AG04450 (cell line): ENCODE measurements at regions of chr17 and their contacts with region 1.

Region 1: DNA sequence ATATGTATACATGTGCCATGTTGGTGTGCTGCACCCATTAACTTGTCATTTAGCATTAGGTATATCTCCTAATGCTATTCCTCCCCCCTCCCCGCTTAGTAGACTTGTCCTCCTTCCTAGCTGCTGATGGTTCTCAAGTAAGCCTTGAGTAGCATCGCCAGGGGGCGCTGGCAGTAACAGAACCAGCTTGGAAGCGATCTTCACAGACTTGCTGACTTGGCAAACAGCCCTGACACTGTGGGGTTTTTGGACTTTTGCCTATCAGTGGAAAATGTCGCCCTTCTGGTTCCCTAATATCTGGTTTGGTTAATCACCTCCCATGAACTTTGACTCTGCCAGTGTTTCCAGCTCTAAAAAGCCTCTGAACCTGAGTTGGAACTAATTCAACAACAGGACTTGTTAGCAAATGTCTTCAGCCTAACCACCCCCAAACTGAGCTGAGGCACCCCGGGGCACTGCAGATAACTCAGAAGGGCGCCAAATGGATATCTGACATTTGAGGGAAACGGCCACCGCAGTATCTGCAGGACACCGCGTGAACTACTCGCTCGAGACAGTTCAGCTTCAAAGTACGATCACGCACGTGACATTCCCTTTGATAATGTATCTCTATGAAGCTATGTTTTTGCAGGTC is 15.4 kb upstream of the SPATA32 start:
- DNase-seq: peak; percentile 81
- H3K4me3 ChIP-seq: no peak overlapping the region
- H3K27ac ChIP-seq: peak overlapping the region; percentile 31
- H3K27me3 ChIP-seq: no peaks in the 10 kb centered on the region
- CTCF ChIP-seq: peak; percentile 91

Region 2: DNA sequence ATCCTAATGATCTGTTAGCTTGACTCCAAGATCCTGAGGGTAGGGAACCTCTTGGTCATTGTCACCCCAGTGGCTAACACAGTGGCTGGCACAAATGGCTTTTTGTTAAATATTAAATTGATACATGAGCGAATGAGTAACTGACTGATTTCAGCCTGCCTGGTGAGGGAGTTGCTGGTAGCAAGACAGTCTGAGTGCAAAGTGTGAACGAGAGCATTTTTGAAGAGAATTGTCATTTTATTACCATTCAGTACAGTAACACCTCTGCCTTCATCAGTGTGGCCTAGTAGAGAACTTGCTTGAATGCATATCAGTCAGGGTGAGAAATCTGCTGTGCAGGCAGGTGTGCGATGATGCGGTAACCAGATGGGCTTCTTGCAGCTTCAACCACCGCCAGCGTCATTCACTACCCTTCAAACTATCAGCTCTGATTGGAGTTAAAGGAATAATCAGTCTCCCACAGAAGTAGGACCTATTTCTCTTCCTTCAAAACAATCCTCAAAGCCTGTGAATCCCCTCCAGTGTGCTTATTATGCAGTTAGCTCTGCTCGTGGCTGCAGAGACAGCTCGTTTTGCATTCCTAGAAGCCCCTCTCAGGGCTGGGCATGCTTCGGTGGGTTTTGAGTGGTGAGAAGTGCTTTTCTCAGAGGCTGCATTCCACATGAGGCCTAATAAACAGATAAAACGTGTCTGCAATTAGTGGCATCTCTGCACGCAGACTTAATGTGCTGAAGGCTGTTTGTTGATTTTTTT is 86.7 kb before region 1 on chr17:
- CTCF ChIA-PET with region 1: no interaction called
- POLR2A ChIA-PET with region 1: no interaction called
- DNase-seq: no peak
- H3K4me3 ChIP-seq: no peak overlapping the region
- H3K27ac ChIP-seq: no peak overlapping the region
- H3K27me3 ChIP-seq: peaks cover 2% of the 10 kb centered on the region
- CTCF ChIP-seq: no peak

Region 3: DNA sequence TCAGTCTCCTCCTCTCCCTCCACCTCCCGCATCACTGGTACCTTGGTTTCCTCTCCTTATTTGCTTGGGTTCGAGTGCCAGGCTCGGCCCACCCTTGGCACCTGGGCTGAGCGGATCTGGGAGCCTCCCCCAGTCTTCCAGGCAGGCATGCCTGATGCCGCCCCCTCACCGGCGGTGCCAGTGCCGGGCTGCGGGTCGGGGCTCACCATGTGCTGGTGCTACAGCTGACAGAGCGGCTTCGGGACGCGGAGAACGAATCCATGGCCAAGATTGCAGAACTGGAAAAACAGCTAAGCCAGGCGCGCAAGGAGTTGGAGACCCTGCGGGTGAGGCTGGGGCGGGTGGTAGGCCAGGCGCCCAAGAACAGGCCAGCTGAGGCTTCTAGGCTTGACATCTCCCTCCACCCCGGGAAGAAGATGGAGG is 36.4 kb before region 1 on chr17:
- CTCF ChIA-PET with region 1: no interaction called
- POLR2A ChIA-PET with region 1: no interaction called
- DNase-seq: no peak
- H3K4me3 ChIP-seq: peak overlapping the region; percentile 41; the same call in 1 of the 2 replicates
- H3K27ac ChIP-seq: no peak overlapping the region
- H3K27me3 ChIP-seq: peaks cover 17% of the 10 kb centered on the region
- CTCF ChIP-seq: no peak

Region 4: GRCh38 chr17:45293413-45294211 is 16.3 kb after region 1 on chr17:
- CTCF ChIA-PET with region 1: interaction called, 23 read pairs
- POLR2A ChIA-PET with region 1: interaction called, 9 read pairs
- DNase-seq: peak; percentile 65
- H3K4me3 ChIP-seq: no peak overlapping the region
- H3K27ac ChIP-seq: peak overlapping the region; percentile 87
- H3K27me3 ChIP-seq: no peaks in the 10 kb centered on the region
- CTCF ChIP-seq: no peak; the same call in 1 of the 2 replicates

Region 5: GRCh38 chr17:45317112-45317928 is 40.0 kb after region 1 on chr17:
- CTCF ChIA-PET with region 1: interaction called, 29 read pairs
- POLR2A ChIA-PET with region 1: interaction called, 13 read pairs
- DNase-seq: peak; percentile 100
- H3K4me3 ChIP-seq: peak overlapping the region; percentile 61
- H3K27ac ChIP-seq: peak overlapping the region; percentile 84
- H3K27me3 ChIP-seq: no peaks in the 10 kb centered on the region
- CTCF ChIP-seq: no peak

Region 6: GRCh38 chr17:45371414-45372327 is 94.3 kb after region 1 on chr17:
- CTCF ChIA-PET with region 1: interaction called, 8 read pairs
- POLR2A ChIA-PET with region 1: interaction called, 11 read pairs
- DNase-seq: peak; percentile 93
- H3K4me3 ChIP-seq: peak overlapping the region; percentile 29; the same call in 1 of the 2 replicates
- H3K27ac ChIP-seq: peak overlapping the region; percentile 100
- H3K27me3 ChIP-seq: no peaks in the 10 kb centered on the region
- CTCF ChIP-seq: peak; percentile 16

Region 7: GRCh38 chr17:45394913-45395568 is 117.7 kb after region 1 on chr17:
- CTCF ChIA-PET with region 1: interaction called, 12 read pairs
- POLR2A ChIA-PET with region 1: no interaction called
- DNase-seq: peak; percentile 81
- H3K4me3 ChIP-seq: peak overlapping the region; percentile 50
- H3K27ac ChIP-seq: no peak overlapping the region
- H3K27me3 ChIP-seq: peaks cover 5% of the 10 kb centered on the region
- CTCF ChIP-seq: peak; percentile 79

Region 8: GRCh38 chr17:45440155-45440778 is 162.9 kb after region 1 on chr17:
- CTCF ChIA-PET with region 1: no interaction called
- POLR2A ChIA-PET with region 1: no interaction called
- DNase-seq: no peak
- H3K4me3 ChIP-seq: no peak overlapping the region
- H3K27ac ChIP-seq: no peak overlapping the region
- H3K27me3 ChIP-seq: no peaks in the 10 kb centered on the region
- CTCF ChIP-seq: no peak